Adrenal gland (tissue), 19 donors: ENCODE measurements at regions of chr3 and their contacts with region 1.

Region 1: GRCh38 chr3:53293867-53294266 is 38.0 kb upstream of the TKT start:
- DNase-seq: no peak
- H3K4me3 ChIP-seq: no peak overlapping the region
- H3K27ac ChIP-seq: no peak overlapping the region
- H3K4me1 ChIP-seq: peaks cover 8 to 15% of the 10 kb centered on the region in 2 donors
- H3K27me3 ChIP-seq: no peaks in the 10 kb centered on the region
- CTCF ChIP-seq: no peak
- POLR2A ChIP-seq: no peak

Region 2: DNA sequence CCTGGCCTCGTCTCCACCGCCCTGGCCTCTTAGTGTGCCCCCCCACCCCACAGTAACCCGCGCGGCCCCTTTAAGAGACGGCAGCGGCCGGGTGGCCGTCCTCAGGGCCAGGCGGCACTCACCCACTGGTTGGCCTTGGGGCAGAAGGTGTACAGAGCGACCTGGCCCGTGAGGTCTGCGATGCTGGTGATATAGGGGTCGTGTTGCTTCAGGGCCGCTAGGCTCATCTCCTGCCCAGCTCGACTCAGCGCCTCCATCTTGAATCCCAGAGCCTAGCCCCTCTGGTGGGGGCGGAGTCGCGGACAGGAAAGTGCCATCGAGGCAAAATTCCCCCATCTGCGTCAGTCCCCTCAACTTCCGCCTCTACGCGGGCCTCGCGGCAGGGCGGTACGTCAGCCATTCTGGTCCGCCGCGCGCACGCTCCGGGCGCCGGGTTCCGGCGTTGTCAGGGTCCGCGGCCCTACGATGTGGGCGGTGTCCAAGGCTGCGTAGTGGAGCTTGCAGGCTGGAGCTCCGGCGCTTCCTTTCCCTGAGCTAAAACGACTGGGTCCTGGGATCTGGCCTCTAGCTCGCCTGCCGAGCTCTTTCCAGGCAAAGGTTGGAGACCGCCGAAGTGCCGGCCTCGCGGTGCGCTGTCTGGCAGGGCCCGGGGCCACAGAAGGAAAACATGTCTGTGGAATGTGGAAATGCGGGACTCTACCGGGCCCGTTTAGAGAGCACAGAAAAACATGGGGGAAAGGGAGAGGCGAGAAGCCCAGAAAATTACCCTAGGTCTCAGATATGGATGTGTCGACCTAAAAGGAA is 53.6 kb after region 1 on chr3 and contains the start of gene DCP1A:
- intact Hi-C with region 1: loop called in 1 of 2 experiments (anchors 10 kb)
- DNase-seq: peak; percentile 95 to 98 (median 97)
- H3K4me3 ChIP-seq: peak within 1 kb of the TSS; percentile 46 to 98 (median 88)
- H3K27ac ChIP-seq: peak within 1 kb of the TSS; percentile 82 to 99 (median 96)
- H3K4me1 ChIP-seq: peaks cover 11 to 38% of the 10 kb centered on the region in 2 donors
- H3K27me3 ChIP-seq: no peaks in the 10 kb centered on the region
- CTCF ChIP-seq: peak in 2 of 6 experiments; percentile 14 to 24
- POLR2A ChIP-seq: peak; percentile 91 to 96
- total RNA-seq, gene DCP1A: 14.7 to 31.0 (median 25.8) TPM

Region 3: DNA sequence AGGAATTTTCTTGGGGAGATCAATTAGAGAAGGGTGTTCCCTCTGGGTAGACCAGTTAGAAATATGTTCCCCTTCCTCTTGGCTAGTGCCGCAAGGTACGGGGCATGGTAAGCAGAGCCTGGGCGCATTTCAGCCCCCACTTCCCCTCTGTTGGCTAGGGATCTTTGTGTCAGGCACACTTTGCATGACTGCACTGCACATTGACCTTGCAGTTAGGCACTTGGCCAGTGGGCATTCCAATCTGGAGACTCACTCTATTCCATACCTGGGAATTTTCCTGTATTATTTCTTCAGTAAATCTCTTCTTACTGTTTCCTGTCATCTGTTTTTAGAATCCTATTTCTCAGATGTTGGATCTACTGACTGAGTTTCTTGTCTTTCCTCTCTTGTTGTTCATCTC is 170.6 kb after region 1 on chr3:
- intact Hi-C with region 1: no loop called
- DNase-seq: peak; percentile 53 to 88 (median 77)
- H3K4me3 ChIP-seq: no peak overlapping the region
- H3K27ac ChIP-seq: no peak overlapping the region
- H3K4me1 ChIP-seq: peaks cover 0 to 7% of the 10 kb centered on the region in 2 donors
- H3K27me3 ChIP-seq: no peaks in the 10 kb centered on the region
- CTCF ChIP-seq: no peak
- POLR2A ChIP-seq: no peak